CD4-positive, alpha-beta memory T cell (primary cell): ENCODE measurements at regions of chr20 and their contacts with region 1.

Region 1: DNA sequence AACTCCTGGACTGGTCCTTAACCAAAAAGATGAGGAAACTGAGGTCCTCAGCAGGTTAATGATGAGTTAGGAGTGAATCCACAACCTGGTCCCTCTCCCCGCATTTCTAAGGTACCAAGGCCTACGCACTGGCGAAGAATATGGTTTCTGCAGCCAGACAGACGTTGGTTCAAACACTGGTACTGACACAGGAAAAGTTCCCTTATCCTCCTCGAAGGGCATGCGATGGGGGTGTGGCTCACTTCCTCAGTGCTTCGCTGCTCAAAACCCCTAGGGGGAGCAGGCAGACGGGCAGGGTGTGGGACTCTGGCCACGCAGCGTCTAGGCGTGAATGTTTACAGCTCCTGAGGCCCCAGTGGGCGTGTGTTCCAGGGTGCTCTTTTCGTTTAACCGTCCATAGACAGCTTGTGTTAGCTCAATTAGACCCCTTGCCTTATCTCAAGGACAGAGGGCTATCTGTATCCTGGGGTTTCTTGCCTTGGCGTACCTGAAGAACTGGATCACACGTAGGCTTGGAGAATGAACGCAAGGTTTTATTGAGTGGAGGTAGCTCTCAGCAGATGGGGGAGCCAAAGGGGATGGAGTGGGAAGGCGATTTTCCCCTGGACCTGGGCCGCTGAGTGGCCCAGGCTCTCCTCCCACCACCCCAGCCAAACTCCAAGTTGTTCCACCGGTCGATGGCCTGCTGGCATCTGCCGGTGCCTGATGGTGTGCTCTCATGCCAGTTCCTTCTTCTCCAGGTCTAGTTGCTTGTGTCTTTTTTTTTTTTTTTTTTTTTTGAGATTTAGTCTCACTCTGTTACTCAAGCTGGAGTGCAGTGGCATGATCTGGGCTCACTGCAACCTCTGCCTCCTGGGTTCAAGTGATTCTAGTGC is 31.8 kb upstream of the PTPN1 start:
- DNase-seq: peak; percentile 74 to 82 (median 75)
- H3K4me3 ChIP-seq: no peak overlapping the region
- H3K4me3 Mint-ChIP-seq: peak overlapping the region in 2 of 8 donors; percentile 4 to 25
- H3K27ac ChIP-seq: no peak overlapping the region
- H3K27ac Mint-ChIP-seq: peak overlapping the region in 4 of 7 donors; percentile 5 to 37 (median 22)
- H3K4me1 ChIP-seq: peaks cover 20% of the 10 kb centered on the region
- H3K4me1 Mint-ChIP-seq: peaks cover 13 to 23% (median 21%) of the 10 kb centered on the region in 4 donors
- H3K27me3 ChIP-seq: no peaks in the 10 kb centered on the region
- H3K27me3 Mint-ChIP-seq: no peaks in the 10 kb centered on the region

Region 2: GRCh38 chr20:50338479-50339391 is 139.7 kb before region 1 on chr20:
- CTCF ChIA-PET with region 1: no interaction called
- POLR2A ChIA-PET with region 1: no interaction called
- intact Hi-C with region 1: no loop called
- DNase-seq: peak in 4 of 5 donors; percentile 16 to 41 (median 30)
- H3K4me3 ChIP-seq: peak overlapping the region in 1 of 2 donors; percentile 40
- H3K4me3 Mint-ChIP-seq: peak overlapping the region; percentile 53 to 79 (median 70)
- H3K27ac ChIP-seq: peak overlapping the region; percentile 10
- H3K27ac Mint-ChIP-seq: peak overlapping the region; percentile 39 to 87 (median 77)
- H3K4me1 ChIP-seq: peaks cover 32% of the 10 kb centered on the region
- H3K4me1 Mint-ChIP-seq: peaks cover 20 to 35% (median 23%) of the 10 kb centered on the region in 4 donors
- H3K27me3 ChIP-seq: no peaks in the 10 kb centered on the region
- H3K27me3 Mint-ChIP-seq: no peaks in the 10 kb centered on the region

Region 3: DNA sequence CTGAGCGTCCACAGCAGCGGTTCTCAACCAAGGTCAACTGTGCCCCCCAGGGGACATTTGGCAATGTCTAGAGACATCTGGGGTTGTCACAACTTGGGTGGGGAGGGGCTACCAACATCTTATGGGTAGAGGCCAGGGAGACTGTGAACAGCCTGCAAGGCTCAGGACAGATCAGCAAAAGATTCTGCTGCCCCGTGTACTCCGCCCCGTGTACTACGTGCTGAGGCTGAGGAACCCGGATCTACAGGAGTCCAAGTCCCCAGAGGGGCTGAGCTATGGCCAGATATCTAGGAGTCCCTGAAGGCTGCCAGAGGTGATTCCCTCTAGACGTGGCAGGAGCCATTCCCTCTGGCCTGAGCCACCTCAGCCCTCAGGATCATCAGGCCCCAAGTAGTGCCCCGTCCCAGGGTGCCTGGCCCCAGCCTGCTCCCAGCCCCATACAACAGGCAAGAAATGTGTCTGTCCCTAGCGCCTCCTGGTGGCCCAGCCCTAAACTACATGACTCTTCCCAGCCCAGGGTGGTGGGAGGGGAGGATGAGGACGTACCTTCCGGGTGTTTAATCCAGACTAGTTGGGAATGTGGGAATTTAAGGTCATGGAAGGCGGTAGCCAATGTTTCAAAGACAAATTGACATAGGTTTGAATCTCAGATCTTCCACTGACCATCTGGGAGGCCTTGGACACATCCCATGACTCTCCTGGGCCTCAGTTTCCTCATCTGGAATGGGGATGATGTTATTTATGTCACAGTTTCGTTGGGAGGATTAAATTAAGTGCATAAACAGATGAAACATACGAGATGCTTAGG is 17.7 kb before region 1 on chr20:
- CTCF ChIA-PET with region 1: interaction called, 21 read pairs
- POLR2A ChIA-PET with region 1: interaction called, 3 read pairs
- intact Hi-C with region 1: no loop called
- DNase-seq: peak; percentile 70 to 80 (median 76)
- H3K4me3 ChIP-seq: no peak overlapping the region
- H3K4me3 Mint-ChIP-seq: no peak overlapping the region
- H3K27ac ChIP-seq: no peak overlapping the region
- H3K27ac Mint-ChIP-seq: peak overlapping the region in 2 of 7 donors; percentile 15 to 37
- H3K4me1 ChIP-seq: peaks cover 8% of the 10 kb centered on the region
- H3K4me1 Mint-ChIP-seq: peaks cover 0 to 5% (median 4%) of the 10 kb centered on the region in 4 donors
- H3K27me3 ChIP-seq: no peaks in the 10 kb centered on the region
- H3K27me3 Mint-ChIP-seq: peaks cover 2 to 10% of the 10 kb centered on the region in 2 donors

Region 4: GRCh38 chr20:50467718-50468356 is 10.6 kb before region 1 on chr20:
- CTCF ChIA-PET with region 1: interaction called, 21 read pairs
- POLR2A ChIA-PET with region 1: interaction called, 8 read pairs
- intact Hi-C with region 1: no loop called
- DNase-seq: peak; percentile 19 to 45 (median 31)
- H3K4me3 ChIP-seq: no peak overlapping the region
- H3K4me3 Mint-ChIP-seq: no peak overlapping the region
- H3K27ac ChIP-seq: no peak overlapping the region
- H3K27ac Mint-ChIP-seq: no peak overlapping the region
- H3K4me1 ChIP-seq: peaks cover 20% of the 10 kb centered on the region
- H3K4me1 Mint-ChIP-seq: peaks cover 14 to 29% (median 18%) of the 10 kb centered on the region in 4 donors
- H3K27me3 ChIP-seq: no peaks in the 10 kb centered on the region
- H3K27me3 Mint-ChIP-seq: no peaks in the 10 kb centered on the region

Region 5: DNA sequence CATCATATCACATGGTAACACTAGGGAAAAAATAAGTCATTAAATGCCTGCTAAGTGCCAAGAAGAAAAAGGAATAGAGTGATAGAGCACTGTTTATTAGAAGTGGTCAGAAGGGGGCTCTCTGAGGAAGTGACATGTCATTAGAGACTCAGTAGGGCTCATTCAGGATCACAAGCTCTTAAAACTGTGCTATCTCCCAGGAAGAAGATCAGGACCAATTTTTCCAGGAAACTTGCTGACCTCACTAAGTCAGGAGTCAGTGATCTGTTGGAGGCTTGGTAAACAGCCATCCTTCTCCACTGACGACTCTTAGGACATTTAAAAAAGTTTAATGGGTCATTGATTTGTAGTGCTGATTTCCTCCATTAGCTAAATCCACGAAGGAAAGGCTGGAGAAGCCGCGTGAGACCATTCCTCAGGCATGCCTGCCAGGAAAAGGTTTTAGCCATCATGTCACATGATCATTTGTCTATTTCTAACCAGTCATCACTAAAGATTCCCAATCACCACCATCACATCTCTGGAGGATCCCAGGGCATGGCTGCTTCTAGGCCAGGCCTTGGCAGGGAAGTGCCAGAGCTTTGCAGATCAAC is 25.9 kb after region 1 on chr20:
- CTCF ChIA-PET with region 1: interaction called, 25 read pairs
- POLR2A ChIA-PET with region 1: interaction called, 27 read pairs
- intact Hi-C with region 1: no loop called
- DNase-seq: peak in 1 of 5 donors; percentile 22
- H3K4me3 ChIP-seq: no peak overlapping the region
- H3K4me3 Mint-ChIP-seq: no peak overlapping the region
- H3K27ac ChIP-seq: no peak overlapping the region
- H3K27ac Mint-ChIP-seq: peak overlapping the region in 2 of 7 donors; percentile 32 to 87
- H3K4me1 ChIP-seq: peaks cover 1% of the 10 kb centered on the region
- H3K4me1 Mint-ChIP-seq: peaks cover 0 to 11% (median 3%) of the 10 kb centered on the region in 4 donors
- H3K27me3 ChIP-seq: no peaks in the 10 kb centered on the region
- H3K27me3 Mint-ChIP-seq: no peaks in the 10 kb centered on the region

Region 6: DNA sequence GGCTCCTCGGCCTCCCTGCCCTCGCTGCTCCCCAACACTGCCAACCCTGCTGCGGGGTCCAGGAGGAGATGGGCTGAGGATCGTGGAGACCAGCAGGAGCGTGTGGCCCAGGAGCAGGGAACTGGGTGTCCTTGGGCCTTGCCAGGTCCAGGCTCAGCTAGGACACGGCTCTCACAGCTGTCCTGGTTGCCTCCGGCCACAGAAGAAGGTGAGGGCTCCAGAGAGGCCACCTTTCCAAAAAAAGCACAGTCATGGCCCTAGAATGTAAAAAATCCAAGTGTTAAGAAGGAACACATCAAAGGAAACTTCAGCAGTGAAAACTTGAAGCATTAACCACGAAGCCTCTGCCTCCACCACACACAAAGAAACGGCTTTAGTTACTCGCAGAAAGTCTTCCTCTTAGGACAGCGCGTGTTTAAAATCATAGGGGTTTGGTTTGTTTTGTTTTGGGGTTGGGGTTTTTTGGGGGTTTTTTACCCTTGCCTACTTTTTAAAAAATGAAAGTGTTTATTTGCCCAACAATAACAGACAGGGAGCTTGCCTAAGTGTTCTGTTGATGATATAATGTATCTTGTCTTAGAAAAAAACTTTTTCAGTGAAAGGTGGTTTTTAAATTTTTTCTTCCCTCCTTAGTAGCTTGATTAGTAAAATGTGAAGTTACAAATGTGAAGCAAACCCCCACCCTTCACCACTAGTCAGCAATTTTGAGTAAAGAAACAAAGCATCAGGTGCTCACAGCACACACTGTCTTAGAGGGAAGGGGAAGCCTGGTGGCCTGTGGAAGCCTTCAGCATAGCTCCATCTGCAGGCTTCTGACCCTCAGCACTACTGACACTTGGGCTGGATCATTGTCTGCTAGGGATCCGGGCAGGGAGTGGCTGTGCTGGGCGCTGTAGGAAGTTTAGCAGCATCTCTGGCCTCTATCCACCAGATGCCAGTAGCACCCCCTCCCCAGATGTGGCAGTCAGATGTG is 91.8 kb after region 1 on chr20:
- CTCF ChIA-PET with region 1: interaction called, 106 read pairs
- POLR2A ChIA-PET with region 1: interaction called, 5 read pairs
- intact Hi-C with region 1: loop called (anchors 1 kb)
- DNase-seq: peak; percentile 30 to 66 (median 39)
- H3K4me3 ChIP-seq: no peak overlapping the region
- H3K4me3 Mint-ChIP-seq: peak overlapping the region in 6 of 8 donors; percentile 5 to 81 (median 56)
- H3K27ac ChIP-seq: no peak overlapping the region
- H3K27ac Mint-ChIP-seq: peak overlapping the region; percentile 68 to 86 (median 84)
- H3K4me1 ChIP-seq: peaks cover 36% of the 10 kb centered on the region
- H3K4me1 Mint-ChIP-seq: peaks cover 39 to 89% (median 65%) of the 10 kb centered on the region in 4 donors
- H3K27me3 ChIP-seq: no peaks in the 10 kb centered on the region
- H3K27me3 Mint-ChIP-seq: no peaks in the 10 kb centered on the region

Region 7: DNA sequence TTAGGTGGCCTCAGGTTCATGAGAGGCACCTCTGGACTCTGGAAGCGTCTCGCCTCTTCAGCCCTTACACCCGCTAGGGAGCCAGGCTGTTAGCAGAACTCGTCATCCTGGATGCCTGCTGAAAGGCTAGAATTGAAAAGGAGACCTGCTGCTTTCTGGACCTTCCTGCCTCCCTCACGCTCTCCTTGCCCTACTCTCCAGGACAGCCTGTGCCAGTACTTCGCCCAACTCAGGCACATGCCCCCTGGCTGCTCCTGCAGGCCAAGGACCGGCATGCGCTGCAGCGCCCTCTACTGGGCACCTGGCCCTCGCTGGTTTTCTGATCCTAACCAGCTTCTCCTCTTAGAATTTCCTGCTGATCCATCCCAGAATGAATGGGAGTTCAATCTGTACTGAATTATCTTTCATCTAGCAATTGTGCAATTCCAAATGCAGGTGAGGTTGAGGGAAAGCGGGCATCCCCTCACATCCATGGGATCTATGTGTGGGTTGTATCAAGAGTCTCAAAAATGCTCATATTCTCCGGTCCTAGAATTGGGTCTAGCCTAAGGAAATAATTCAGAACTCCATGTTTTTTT is 109.7 kb after region 1 on chr20:
- CTCF ChIA-PET with region 1: interaction called, 6 read pairs
- POLR2A ChIA-PET with region 1: no interaction called
- intact Hi-C with region 1: loop called (anchors 1 kb)
- DNase-seq: peak; percentile 59 to 70 (median 65)
- H3K4me3 ChIP-seq: no peak overlapping the region
- H3K4me3 Mint-ChIP-seq: no peak overlapping the region
- H3K27ac ChIP-seq: no peak overlapping the region
- H3K27ac Mint-ChIP-seq: peak overlapping the region in 4 of 7 donors; percentile 40 to 83 (median 62)
- H3K4me1 ChIP-seq: no peaks in the 10 kb centered on the region
- H3K4me1 Mint-ChIP-seq: peaks cover 1 to 15% (median 4%) of the 10 kb centered on the region in 4 donors
- H3K27me3 ChIP-seq: no peaks in the 10 kb centered on the region
- H3K27me3 Mint-ChIP-seq: no peaks in the 10 kb centered on the region